ENCODE measurements at regions of chr15 and their contacts with region 1.

Region 1: GRCh38 chr15:60444289-60444912 is 34.5 kb downstream of the ICE2 start:
- DNase-seq: no peak
- H3K4me3 ChIP-seq: no peak overlapping the region
- CTCF ChIP-seq: peak; percentile 35

Region 2: DNA sequence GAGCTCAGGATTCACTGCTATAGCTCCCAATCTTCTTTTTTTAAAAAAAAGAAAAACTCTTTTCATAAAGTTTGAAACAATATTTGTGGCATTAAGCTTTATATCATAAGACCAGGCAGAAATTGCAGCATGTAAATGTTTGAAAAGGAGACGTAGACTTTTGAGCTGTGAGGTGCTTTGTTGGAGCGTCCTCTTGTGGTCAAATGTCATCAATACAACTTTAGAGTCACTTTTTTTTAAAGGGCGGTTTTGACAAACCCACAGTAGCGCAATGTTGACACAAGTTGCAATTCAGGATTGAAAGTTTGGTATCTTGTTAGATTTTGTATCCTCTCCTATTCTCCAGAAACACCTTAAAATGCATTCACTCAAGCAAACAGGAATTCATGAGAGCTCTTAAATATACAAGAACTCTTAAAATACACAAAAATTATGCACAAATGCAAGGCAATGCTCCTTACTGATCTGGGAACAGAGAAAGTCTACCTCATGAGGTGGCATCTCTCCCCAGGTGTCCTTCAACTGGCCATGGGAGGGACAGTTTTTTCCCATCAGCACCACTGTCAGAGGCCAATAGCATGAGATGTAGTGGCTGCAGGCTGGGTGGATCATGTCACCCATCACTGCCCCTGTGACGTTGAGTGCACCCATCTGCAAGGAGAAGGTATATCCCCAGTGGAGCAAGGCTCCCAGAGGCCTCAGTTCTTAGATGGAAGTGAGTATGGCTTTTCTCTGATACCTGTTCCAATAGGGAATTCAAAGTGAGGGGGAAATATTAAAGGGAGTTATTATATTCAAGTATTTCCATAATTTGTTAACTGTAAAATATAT is 117.4 kb before region 1 on chr15:
- CTCF ChIA-PET with region 1: interaction called, 71 read pairs
- POLR2A ChIA-PET with region 1: no interaction called
- DNase-seq: no peak
- H3K4me3 ChIP-seq: no peak overlapping the region
- CTCF ChIP-seq: peak; percentile 69

Region 3: DNA sequence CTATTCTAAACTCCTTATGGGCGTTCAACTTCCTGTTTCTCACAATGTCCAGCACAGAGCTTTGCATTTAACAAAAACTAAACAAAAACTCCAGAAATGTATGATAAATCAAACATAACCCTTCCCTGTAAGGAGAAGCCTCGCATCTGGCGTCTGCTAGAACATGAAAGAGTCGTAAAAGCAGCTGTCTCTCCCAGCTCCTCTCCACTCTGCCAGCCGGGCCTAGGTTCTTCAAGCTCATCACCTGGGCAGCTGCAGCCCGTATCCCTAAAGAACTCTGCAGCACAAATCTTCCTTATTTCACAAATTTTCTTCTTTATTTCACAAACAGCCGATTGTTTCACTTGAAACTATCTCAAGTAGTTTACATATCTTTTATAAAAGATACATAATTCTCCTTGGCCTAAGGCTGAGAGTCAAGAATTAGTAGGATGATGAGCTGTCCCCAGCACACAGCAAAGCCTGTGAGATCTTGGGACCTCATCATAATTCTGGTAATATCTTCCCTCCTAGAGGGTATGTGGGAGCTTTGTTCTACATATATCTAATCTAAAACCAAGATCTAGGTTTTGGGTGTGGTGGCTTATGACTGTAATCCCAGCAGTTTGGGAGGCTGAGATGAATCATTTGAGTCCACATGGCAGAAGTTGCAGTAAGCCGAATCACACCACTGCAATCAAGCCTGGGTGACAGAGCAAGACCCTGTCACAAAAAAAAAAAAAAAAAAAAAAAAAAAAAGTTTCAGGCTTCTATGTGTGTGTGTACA is 81.9 kb before region 1 on chr15:
- CTCF ChIA-PET with region 1: interaction called, 19 read pairs
- POLR2A ChIA-PET with region 1: no interaction called
- DNase-seq: no peak
- H3K4me3 ChIP-seq: no peak overlapping the region
- CTCF ChIP-seq: no peak

Region 4: DNA sequence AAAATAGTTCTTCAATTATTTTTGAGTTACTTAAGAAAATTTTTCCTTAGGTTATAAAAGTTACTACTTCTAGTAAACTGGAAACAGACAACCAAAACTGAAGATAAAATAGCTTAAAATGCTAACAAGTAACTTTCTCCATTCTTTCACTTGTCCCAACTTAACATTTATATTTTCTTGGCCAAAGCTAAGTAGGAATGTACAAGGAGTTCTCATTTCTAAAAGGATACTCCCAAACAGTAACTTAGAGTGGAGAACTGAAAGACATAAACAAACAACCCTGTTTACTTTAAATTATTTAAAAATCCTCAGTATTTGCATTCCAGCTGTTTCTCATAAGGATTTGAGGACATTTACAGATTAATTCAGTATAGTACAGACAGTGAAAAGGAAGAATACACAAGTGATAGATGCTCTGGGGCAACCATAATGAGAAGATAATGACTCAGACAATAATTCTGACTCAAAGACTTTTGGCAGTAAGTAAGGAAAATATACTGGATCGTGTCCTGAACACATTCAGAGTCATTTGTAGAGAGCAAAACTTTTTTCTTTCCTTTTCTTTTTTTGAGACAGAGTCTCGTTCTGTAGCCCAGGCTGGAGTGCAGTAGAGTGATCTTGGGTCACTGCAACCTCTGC is 17.4 kb before region 1 on chr15:
- CTCF ChIA-PET with region 1: interaction called, 63 read pairs
- POLR2A ChIA-PET with region 1: no interaction called
- DNase-seq: no peak
- H3K4me3 ChIP-seq: no peak overlapping the region
- CTCF ChIP-seq: no peak